GM12878 (cell line): ENCODE measurements at regions of chr1 and their contacts with region 1.

Region 1: DNA sequence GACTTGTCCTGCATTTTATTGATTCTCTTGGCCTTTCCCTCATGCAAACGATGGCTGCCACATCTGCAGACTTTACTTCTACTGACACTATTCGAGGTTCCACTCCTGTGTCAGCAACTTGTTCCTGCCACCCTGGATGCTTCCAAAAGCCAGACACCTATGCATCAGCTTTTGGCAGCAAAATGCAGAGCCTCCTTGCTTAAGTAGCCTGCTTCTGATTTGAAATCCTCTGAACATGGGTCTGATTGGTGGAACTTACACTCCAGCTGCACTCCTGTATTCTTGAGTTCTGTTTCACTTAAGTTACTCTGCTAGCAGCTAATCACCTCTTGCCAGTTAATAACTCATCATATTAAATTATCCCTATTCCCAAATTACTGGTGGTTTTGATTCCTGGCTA is 152.1 kb upstream of the FMN2 start:
- DNase-seq: no peak
- ATAC-seq: no peak
- H3K4me3 ChIP-seq: no peak overlapping the region
- H3K27ac ChIP-seq: no peak overlapping the region
- H3K4me1 ChIP-seq: no peaks in the 10 kb centered on the region
- H3K27me3 ChIP-seq: no peaks in the 10 kb centered on the region
- CTCF ChIP-seq: no peak
- EP300 ChIP-seq: no peak
- POLR2A ChIP-seq: no peak
- RAD21 ChIP-seq: no peak

Region 2: DNA sequence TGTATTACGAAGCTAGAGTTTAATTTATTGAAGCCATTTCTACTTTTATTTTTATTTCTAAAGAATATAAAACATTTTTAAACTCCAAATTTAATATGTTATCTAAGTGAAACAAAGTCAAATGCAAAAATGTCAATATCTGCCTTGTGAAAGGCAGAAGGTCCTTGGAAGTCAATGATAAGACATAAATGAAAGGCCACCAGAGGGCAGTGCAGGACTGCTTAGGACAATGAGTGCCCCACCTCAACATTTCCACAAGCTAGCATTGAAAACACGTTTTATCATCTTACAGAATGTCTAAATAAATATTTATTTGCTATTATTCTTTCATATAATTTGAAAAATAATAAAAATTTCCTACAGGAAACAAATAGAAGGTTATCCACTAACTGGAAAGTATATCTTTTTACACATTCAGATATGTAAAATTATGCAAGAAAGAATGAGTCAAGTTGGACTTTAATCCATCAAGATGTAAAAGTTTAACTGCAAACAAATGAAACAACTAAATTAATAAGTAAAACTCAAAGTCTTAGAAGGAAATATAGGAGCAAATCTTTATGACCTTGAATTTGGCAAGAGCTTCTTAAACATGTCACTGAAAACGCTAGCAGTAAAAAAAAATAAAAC is 12.0 kb after region 1 on chr1:
- CTCF ChIA-PET with region 1: interaction called, 10 read pairs
- POLR2A ChIA-PET with region 1: no interaction called
- RAD21 ChIA-PET with region 1: interaction called, 3 read pairs
- SMC1A ChIA-PET with region 1: interaction called, 3 read pairs
- in situ Hi-C with region 1: no loop called
- intact Hi-C with region 1: no loop called
- DNase-seq: no peak
- ATAC-seq: peak; percentile 84
- H3K4me3 ChIP-seq: no peak overlapping the region
- H3K27ac ChIP-seq: no peak overlapping the region
- H3K4me1 ChIP-seq: no peaks in the 10 kb centered on the region
- H3K27me3 ChIP-seq: no peaks in the 10 kb centered on the region
- CTCF ChIP-seq: peak; percentile 63 to 71 (median 65)
- EP300 ChIP-seq: no peak
- POLR2A ChIP-seq: no peak
- RAD21 ChIP-seq: peak; percentile 76